Panc1 (cell line): ENCODE measurements at regions of chr1 and their contacts with region 1.

Region 1: GRCh38 chr1:205321164-205321958 is at the start of gene NUAK2:
- DNase-seq: no peak
- ATAC-seq: peak; percentile 89
- H3K4me3 ChIP-seq: peak within 1 kb of the TSS; percentile 88 to 89
- H3K27ac ChIP-seq: peak within 1 kb of the TSS; percentile 72
- H3K4me1 ChIP-seq: peaks cover 40% of the 10 kb centered on the region
- H3K27me3 ChIP-seq: no peaks in the 10 kb centered on the region
- CTCF ChIP-seq: peak; percentile 58; the same call in 1 of the 2 replicates
- total RNA-seq, gene NUAK2: 17.4 TPM

Region 2: DNA sequence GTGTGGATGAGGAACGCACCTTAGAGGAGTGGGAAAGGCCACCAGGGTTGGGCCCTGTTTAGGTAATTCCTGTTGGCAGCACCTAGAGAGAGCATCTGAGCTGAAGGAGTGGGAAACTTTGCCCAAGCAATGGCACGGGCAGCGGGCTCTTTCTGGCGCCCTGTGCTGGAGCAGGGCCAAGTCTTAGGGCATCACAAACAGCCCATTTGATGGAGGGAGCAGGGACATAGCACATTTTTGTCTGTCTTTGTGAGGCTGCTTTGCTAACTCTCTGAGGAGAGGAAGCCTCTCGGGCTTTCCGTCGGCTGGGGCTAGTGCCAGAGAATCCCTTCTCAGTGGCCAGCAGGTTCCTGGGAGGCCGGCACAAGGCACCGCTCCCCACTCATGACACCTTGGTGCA is 300.9 kb before region 1 on chr1:
- CTCF ChIA-PET with region 1: no interaction called
- POLR2A ChIA-PET with region 1: no interaction called
- in situ Hi-C with region 1: no loop called
- intact Hi-C with region 1: no loop called
- DNase-seq: no peak
- ATAC-seq: no peak
- H3K4me3 ChIP-seq: no peak overlapping the region
- H3K27ac ChIP-seq: no peak overlapping the region
- H3K4me1 ChIP-seq: no peaks in the 10 kb centered on the region
- H3K27me3 ChIP-seq: peaks cover 7% of the 10 kb centered on the region; the same call in 1 of the 2 replicates
- CTCF ChIP-seq: no peak

Region 3: DNA sequence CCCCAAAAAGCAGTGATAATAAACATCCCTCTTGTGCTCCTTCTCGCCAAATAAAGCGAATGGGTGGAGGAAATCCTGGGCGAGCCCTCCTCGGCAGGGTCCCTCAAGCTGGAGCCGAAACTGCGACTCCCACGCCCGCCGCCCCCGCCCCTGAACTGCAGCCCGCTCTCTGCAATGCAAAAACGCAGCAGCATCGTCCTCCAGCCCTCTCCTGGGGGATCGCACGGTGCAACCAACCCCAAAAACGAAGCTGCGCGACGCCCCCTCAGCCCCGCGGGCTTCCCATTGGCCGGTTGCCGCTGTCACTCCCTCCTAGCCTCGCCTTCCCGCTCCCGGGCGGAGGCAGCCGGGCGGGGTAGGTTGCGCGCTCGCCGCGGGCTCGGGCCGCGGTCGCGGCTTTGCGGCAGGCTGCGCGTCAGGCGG is 93.8 kb before region 1 on chr1 and contains the start of gene TMCC2:
- CTCF ChIA-PET with region 1: interaction called, 18 read pairs
- POLR2A ChIA-PET with region 1: no interaction called
- in situ Hi-C with region 1: no loop called
- intact Hi-C with region 1: no loop called
- DNase-seq: no peak
- ATAC-seq: peak; percentile 96
- H3K4me3 ChIP-seq: peak within 1 kb of the TSS; percentile 70 to 74
- H3K27ac ChIP-seq: peak within 1 kb of the TSS; percentile 65; the same call in 1 of the 2 replicates
- H3K4me1 ChIP-seq: peaks cover 9% of the 10 kb centered on the region
- H3K27me3 ChIP-seq: no peaks in the 10 kb centered on the region; the same call in 1 of the 2 replicates
- CTCF ChIP-seq: no peak
- total RNA-seq, gene TMCC2: 3.1 TPM

Region 4: DNA sequence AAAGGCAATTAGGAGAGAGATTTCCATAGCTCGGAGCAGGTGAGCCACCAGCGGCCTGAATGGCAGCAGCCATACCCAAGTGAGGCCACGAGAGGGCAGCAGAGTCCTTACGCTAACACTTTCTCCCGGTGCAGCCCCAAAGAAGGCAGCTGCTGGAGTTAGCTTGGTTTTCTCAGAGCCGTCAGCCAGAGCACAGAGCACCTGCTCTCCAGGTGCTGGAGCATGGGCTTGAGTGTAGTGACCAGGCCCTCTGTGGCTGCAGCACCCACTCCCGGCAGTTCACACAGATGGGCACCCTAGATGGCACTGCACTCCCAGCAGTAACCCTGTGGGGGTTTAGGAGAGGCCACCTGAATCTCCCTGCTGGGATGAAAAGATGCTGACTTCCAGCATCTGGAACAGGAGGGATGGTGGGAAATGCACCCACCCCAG is 47.8 kb before region 1 on chr1:
- CTCF ChIA-PET with region 1: interaction called, 149 read pairs
- POLR2A ChIA-PET with region 1: no interaction called
- in situ Hi-C with region 1: no loop called
- intact Hi-C with region 1: loop called (anchors 1 kb)
- DNase-seq: peak; percentile 76
- ATAC-seq: peak; percentile 82
- H3K4me3 ChIP-seq: no peak overlapping the region
- H3K27ac ChIP-seq: peak overlapping the region; percentile 56
- H3K4me1 ChIP-seq: peaks cover 34% of the 10 kb centered on the region
- H3K27me3 ChIP-seq: no peaks in the 10 kb centered on the region
- CTCF ChIP-seq: peak; percentile 97

Region 5: GRCh38 chr1:206128196-206128595 is 806.8 kb after region 1 on chr1:
- CTCF ChIA-PET with region 1: no interaction called
- POLR2A ChIA-PET with region 1: no interaction called
- in situ Hi-C with region 1: no loop called
- intact Hi-C with region 1: no loop called
- DNase-seq: no peak
- ATAC-seq: no peak
- H3K4me3 ChIP-seq: no peak overlapping the region
- H3K27ac ChIP-seq: no peak overlapping the region
- H3K4me1 ChIP-seq: no peaks in the 10 kb centered on the region
- H3K27me3 ChIP-seq: peaks cover 24% of the 10 kb centered on the region
- CTCF ChIP-seq: no peak